ENCODE measurements at regions of chr14 and their contacts with region 1.

Region 1: GRCh38 chr14:33839193-33840076 is 111.4 kb downstream of the EGLN3 start:
- DNase-seq: no peak

Region 2: DNA sequence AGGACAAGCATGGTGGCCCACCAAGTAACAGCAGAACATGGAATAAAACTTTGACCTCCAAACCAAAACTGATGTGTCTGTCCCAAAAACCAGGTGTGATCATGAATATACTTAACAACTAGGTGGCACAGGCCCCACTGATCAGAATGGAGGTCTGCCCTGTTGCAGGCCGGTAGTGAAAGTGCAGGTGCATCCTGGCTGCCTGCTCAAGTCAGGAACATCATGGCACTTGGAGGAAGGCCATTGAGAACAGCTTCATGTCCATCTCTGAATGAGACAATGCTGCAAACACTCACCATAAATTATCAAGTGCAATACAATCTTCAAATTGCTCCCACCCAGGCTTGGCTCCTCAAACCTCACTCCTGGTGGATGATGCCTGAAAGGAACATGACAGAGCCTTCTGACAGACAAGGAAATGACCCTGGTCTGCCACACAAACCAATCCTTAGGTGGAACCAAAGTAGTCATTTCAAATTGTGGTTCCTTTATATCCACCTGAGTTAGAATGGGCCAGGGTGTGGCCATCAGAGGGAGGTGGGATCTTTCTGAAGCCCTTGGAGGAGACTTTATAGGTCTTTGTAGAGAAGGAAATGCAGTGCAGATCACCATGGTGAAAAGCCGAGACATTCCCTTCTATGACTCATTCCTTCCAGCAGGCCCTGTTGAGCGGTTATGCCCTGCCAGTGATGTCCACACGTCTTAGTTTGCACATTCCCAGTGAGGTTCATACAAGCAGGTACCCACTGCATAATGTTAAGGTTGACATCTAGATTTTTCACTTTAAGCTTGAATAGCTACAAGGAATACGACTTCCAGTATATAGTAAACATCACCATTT is 75.5 kb after region 1 on chr14:
- intact Hi-C with region 1: loop called (anchors 10 kb)
- DNase-seq: no peak

Region 3: GRCh38 chr14:34030864-34031263 is 191.4 kb after region 1 on chr14:
- intact Hi-C with region 1: loop called (anchors 10 kb)
- DNase-seq: no peak

Region 4: DNA sequence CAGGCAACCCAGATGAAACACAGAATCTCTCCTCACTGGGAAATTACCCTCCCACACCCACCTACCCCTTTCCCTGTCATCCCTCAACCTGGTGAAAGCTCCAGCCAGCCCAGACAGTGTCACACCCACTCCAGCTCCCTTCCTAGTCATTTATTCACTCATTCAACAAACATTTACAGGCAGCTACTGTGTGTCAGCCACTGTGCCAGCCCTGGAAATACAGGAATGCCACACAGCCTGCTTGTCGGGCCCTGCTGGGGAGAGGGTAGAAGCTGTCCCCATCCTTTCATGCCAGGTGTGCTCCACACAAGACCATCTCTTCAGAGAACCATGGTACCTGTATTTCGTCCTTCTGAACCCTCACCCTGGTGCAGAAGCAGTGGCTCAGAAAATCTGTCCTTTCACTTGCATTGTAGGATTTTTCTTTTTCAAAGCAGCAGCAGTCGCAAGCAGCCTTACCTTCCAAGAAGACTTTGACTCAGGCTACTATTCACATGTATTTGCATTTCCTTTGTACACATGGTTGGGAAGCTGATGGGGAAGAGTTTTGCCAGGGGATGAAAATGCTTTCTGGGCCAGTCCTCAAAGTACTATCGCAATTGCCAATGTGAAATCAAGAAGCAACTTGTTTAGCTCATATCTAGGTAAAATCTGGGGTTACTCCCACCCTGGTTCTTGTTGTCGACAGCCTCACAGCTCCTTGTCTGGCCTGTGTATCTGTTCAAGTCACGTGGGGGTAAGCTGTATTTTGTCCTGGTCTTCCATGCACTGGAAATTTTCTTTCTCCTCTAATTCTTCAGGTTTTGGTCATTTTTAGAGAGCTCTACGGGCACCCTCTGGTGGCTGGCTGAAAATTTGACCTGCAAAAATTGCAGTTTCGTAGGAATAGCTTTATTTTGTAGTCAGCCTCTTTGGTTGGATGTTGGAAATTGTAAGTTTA is 258.9 kb after region 1 on chr14:
- intact Hi-C with region 1: loop called (anchors 2 kb)
- DNase-seq: no peak

Region 5: DNA sequence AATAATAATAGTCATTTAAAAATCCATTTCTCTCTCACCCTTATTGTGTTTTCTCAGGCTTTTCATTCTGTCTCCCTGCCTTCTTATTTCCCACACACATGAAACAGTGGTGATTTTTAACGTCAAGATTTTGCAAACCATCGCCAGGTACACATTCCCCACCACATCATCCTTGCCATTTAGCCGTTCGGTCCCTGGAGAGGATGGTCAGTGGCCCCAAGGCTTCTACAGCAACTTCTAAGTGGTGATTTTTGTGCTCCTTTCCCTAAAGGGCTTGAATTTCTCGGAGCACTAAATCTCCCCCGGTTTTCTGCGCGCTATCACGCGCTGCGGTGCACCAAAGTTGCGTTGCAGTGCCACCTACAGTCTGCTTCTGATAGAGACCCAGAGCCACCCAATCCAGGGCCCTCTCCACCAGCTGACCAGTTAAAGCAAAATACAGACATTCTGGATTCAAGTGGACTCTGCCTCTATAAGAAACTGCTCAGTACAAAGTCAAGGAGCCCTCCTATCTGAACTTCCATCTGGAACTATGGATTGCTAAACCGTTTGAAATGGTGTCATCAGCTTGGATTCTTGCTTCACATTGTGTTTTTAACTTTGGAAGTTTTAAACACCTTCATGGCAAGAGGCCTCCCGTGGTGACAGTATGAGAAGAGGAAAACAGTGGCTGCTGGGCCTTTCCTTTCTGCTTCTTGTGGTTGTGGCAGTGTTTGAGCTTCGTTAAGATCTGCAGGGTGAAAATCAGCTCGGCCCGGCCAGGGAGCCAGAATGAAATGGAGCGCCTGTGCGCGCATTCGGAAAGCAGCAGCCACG is 388.6 kb after region 1 on chr14:
- intact Hi-C with region 1: loop called (anchors 2 kb)
- DNase-seq: peak; percentile 84

Region 6: DNA sequence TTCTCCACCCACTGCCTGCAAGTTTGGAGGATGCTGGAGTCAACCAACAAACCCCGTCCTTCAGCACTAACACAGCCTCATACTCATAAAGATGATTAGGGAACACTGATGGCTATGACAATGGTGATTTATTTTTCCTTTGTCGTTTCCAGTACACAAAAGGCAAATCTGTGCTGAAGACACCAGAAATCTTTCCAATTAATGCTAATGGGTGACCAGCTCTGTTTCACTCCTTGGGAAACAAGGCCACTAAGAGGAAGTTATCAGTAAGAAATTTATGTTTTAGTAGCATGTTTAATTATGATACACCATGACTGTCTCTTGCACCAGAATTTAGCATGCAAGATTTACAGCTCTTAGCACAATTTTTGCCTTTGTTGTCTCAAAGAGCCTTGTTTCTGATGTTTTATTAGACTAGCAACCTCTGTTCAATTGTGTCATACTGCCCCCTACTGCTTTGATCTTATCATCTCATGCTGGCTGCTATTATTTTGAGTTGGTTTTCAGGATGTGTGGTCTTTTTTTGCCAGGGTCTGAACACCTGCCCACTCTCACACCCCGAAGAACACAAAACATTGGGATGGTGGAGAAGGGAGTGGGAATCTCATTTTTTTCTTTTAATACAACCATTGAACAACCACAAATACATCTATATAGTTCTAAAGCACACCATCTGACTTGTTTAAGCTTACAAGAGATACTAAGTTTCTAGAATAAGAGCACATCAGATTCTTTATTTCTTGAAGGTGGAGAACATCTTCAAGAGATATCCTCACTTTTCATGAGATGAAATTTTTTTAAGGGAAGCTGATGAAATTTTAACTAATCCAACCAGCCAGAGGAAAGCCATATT is 461.7 kb after region 1 on chr14:
- intact Hi-C with region 1: loop called (anchors 2 kb)
- DNase-seq: no peak

Region 7: DNA sequence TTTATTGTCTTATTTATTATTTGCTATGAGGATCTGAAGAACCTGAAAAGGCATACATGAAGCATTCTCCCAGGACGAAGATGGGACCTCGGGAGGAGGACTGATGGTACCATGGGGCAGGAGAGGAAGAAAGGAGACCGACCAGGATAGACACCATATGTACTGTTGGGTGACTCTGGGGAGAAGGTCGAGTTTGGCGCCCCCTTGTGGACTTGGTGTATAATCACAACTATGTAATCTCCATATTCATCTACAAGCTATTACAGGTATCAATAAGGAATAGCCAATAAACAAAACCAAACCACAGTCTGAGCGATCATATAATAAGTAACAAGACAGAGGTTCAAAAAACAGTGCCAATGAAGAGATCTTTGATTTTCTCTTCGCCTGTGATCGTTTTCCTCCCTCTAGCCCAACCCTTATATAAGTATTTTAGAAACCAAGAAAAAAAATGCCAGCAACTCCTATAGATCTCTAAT is 483.5 kb after region 1 on chr14:
- intact Hi-C with region 1: loop called (anchors 5 kb)
- DNase-seq: peak; percentile 82